Right ventricle myocardium inferior (tissue), 1 donor: ENCODE measurements at regions of chr2 and their contacts with region 1.

Region 1: DNA sequence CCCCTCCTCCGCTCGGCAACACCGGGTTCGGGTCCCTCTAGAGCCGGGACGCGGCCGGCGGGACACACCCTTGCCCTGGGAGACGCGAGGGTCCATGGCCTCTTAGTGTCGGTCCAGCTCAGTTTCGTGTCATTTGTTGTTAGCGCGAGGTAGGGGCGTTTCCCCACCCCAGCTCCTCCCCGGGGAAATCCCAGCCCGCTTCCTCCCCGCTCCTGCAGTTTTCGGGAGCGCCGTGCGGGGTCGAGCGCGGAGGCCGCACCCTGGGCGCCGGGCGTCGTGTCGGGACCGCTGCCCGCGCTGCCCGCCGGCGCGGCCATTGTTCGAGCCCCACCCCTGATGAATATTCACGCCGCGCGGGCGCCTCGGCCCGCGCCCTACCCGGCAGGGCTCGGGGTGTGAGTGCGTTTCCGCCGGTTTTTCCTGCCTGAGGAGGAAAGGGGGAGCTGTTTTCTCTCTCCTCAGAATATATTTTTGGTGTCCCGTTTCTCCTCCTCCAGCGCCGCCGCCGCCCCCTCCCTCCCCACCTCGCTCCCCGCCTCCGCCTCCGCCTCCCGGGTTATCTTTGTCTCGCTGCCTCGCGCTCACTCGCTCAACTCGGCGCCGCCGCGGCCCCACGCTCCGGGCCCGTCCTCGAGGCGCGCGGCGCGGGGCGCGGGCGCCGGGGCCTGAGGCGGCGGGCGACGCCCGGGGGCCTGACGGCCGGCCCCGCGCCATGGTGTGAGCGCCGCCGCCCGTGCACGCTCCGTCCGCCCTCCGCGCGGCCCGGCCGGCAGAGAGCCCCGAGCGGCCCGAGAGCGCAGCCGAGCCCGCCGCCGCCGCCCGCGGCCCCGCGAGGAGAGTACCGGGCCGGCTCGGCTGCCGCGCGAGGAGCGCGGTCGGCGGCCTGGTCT is at the start of gene MAP4K4:
- DNase-seq: peak; percentile 94
- ATAC-seq: peak; percentile 92
- total RNA-seq, gene MAP4K4: 82.5 TPM

Region 2: GRCh38 chr2:101419096-101419663 is 278.2 kb before region 1 on chr2:
- intact Hi-C with region 1: loop called (anchors 5 kb)
- DNase-seq: no peak
- ATAC-seq: peak; percentile 81

Region 3: GRCh38 chr2:101518578-101519492 is 178.5 kb before region 1 on chr2:
- intact Hi-C with region 1: loop called (anchors 5 kb)
- DNase-seq: no peak
- ATAC-seq: peak; percentile 75

Region 4: DNA sequence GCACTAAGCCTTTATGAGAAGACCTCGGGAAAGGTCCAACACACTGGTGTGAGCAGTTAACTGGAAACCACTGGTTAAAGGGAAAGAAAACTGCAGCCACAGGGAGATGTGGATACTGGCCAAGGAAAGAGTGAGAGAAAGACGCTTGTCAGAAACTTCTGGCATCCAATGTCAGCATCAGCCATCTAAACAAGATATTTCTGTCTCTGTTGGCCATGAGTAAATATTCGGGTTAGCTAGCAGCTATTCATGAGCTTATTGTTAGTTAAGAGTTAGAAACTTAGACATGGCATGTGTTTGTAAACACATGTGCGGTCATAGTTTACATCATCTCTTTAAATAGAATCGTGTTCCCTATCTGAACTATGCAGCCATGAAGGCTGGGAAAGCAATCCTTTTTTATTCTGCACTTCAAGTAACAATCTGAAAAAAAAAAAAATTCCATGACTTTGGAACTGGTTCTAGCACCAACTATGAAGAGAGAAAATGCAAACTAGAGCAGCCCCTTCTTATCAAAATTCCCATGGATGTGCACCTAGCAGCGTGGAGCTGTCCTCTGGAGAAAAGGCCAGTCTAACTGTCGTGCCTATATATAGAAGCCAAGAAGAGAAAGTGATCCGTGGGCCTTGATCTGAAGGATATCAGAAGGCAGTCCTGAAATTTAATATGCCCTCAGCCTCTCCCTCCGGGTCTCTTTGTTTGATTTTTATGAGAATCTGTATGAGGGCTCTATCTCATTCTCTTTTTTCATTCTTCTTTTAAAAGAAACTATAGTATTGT is 138.4 kb before region 1 on chr2:
- intact Hi-C with region 1: loop called (anchors 5 kb)
- DNase-seq: no peak
- ATAC-seq: peak; percentile 72

Region 5: DNA sequence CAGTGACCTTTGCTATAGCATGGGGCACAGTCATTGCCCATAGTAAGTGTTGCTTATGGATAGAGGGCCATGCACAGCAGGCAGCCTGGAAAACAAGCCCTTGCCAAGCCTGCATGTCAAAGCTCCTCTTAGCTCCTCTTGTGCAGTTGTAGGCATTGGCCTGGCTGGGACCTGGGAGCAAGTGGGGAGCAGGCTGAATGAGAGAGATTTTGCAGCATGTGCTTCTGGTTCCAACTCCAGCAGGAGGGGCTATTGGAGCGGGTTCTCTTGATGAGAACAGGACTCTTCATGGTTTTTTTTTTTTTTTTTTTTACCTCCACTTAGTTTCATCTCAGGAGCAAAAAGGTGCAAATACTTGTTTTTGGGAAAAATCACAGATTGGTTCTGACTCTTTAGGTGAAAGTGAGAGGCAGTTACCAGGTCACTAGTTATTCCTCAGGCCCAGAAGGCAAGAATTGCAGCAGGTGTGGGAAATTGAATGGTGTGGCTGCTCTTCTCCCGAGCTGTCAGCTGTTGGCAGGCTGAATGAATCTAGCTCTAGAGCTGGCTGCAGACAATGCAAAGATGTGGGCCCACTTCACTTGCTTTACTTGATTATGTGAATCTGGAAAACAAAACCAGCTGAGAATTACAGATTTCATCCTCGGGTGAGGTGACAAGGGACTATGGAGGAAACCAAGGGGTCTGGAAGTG is 96.1 kb after region 1 on chr2:
- intact Hi-C with region 1: loop called (anchors 5 kb)
- DNase-seq: no peak
- ATAC-seq: peak; percentile 24

Region 6: DNA sequence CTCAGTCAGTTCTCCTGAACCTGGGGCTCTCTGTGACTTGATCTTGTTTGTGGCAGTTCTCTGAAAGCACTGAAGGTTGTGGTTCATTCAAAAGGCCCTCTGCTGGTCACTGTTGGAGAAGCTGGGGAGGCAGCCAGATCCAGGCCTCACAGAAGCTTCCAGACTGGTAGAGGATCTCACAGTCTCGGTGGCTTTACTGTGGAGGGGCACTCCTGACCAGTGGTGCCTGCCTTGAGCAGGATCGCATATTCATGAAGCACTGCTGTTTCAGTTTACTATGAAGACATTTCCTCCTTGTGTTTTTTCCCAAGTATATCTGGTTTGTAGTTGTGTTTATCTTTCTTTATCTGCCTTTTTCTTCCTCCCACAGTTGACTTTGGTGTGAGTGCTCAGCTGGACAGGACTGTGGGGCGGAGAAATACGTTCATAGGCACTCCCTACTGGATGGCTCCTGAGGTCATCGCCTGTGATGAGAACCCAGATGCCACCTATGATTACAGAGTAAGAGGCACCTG is 134.0 kb after region 1 on chr2:
- intact Hi-C with region 1: loop called (anchors 1 kb)
- DNase-seq: peak; percentile 73
- ATAC-seq: peak; percentile 80